ENCODE measurements at regions of chr12 and their contacts with region 1.

Region 1: DNA sequence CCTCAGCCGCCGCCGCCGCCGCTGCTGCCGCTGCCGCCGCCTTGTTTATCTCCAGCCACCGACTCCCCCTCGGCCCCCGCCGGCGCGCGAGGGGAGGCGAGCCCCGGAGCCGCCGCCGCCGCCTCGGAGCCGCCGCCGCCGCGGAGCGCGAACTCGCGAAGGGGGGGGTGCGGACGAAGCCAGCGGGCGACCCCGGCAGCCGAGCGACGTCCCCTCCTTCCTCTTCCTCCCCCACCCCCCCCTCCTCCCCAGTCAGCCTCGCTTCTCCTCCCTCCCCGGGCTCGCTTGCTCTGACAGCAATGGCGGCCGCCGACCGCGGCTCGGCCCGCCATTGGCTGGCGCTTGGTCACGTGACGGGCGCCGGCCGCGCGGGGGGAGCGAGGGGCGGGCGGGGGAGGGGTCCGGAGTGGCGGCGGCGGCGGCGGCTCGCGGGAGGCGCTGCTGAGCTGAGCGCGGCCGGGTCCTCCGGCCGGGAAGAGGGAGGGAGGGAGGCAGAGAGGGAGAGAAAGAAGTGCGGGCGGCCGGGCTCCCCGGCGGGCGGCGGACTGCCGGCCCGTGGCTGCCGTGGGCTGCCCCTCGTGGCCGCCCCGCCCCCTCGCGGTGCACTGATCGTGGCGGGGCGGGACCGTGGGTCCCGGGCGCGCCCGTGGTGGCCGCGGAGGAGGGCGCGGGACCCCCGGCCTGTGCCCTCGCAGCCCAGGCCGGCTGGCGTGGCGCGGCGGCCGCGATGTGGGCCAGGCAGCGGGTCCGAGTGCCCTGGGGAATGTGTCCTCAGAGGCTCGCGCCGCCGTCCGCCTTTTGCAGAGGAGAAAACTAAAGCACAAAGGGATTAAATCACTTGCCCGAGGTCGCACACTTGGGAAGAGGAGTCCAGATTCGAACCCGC is at the start of gene MED13L:
- DNase-seq: peak; percentile 84
- H3K4me3 Mint-ChIP-seq: peak within 1 kb of the TSS; percentile 88
- H3K27ac Mint-ChIP-seq: peak within 1 kb of the TSS; percentile 85
- H3K4me1 Mint-ChIP-seq: peaks cover 34% of the 10 kb centered on the region
- H3K27me3 Mint-ChIP-seq: no peaks in the 10 kb centered on the region
- total RNA-seq, gene MED13L: 42.4 to 46.0 TPM

Region 2: GRCh38 chr12:116142936-116143898 is 134.4 kb before region 1 on chr12:
- CTCF ChIA-PET with region 1: no interaction called
- intact Hi-C with region 1: loop called (anchors 2 kb)
- DNase-seq: no peak
- H3K4me3 Mint-ChIP-seq: no peak overlapping the region
- H3K27ac Mint-ChIP-seq: peak overlapping the region; percentile 13
- H3K4me1 Mint-ChIP-seq: peaks cover 55% of the 10 kb centered on the region
- H3K27me3 Mint-ChIP-seq: no peaks in the 10 kb centered on the region

Region 3: GRCh38 chr12:116265351-116266147 is 12.1 kb before region 1 on chr12:
- CTCF ChIA-PET with region 1: interaction called, 5 read pairs
- intact Hi-C with region 1: loop called (anchors 1 kb)
- DNase-seq: no peak
- H3K4me3 Mint-ChIP-seq: no peak overlapping the region
- H3K27ac Mint-ChIP-seq: no peak overlapping the region
- H3K4me1 Mint-ChIP-seq: peaks cover 51% of the 10 kb centered on the region
- H3K27me3 Mint-ChIP-seq: no peaks in the 10 kb centered on the region

Region 4: GRCh38 chr12:116358893-116359761 is 81.5 kb after region 1 on chr12:
- CTCF ChIA-PET with region 1: interaction called, 4 read pairs
- intact Hi-C with region 1: loop called (anchors 2 kb)
- DNase-seq: peak; percentile 67
- H3K4me3 Mint-ChIP-seq: peak overlapping the region; percentile 65
- H3K27ac Mint-ChIP-seq: peak overlapping the region; percentile 77
- H3K4me1 Mint-ChIP-seq: peaks cover 25% of the 10 kb centered on the region
- H3K27me3 Mint-ChIP-seq: no peaks in the 10 kb centered on the region

Region 5: DNA sequence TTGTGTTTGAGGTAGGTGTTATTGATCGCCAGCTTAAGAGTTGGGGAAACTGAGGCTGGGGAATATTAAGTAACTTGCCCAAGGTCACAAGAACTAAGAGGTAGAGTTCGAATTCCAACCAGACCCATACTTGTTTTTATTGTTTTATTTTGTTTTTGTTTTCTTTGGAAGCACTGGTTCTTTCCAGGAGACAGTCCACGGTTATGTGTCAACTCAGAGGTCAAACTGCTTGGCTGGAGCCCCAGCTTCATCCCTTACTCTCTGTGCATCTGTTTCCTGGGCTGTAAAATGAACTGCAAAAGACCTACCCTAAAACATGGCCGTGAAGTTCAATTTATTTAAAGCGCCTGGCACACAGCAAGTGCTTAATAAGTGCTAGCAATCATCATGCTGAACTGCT is 207.2 kb after region 1 on chr12:
- CTCF ChIA-PET with region 1: no interaction called
- intact Hi-C with region 1: no loop called
- DNase-seq: no peak
- H3K4me3 Mint-ChIP-seq: no peak overlapping the region
- H3K27ac Mint-ChIP-seq: no peak overlapping the region
- H3K4me1 Mint-ChIP-seq: peaks cover 11% of the 10 kb centered on the region
- H3K27me3 Mint-ChIP-seq: no peaks in the 10 kb centered on the region

Region 6: DNA sequence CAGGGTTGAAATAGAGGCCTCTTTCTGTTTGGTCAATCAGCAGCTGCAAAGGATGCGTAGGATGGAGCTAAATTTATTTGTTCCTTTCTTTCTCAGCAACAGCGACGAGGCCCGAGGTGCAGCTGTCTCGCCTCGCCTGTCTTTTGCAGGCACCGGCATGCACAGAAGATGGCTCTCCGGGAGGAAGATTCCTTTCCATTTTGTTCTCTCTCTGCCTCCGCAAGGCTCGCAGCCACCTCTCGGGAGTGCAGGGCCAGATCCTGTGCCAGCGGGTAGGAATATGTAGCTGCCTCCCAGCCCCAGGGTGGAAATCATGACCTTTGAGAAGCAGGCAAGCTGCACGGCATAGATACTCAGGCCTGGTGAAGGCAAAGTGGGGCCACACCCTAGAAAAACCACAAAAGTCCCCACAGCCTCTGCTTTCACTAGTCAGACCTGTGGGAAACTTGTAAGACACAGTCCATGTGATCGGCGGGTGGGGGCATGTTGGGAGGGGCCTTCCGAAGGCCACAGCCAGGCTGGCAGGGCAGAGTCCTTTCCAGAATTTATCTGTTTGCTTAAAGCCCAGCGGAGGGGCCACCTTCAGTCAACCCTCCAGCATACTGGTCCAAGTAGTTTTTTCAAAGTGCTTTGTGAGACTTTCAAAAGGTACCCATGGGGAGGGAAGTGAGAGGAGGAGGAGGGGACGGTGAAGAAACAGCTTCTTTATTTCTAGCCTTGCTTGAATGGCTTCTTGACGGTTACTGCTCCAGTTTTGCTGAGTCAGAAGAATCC is 281.7 kb after region 1 on chr12 and contains the start of gene MAP1LC3B2:
- CTCF ChIA-PET with region 1: no interaction called
- intact Hi-C with region 1: loop called (anchors 2 kb)
- DNase-seq: peak; percentile 92
- H3K4me3 Mint-ChIP-seq: peak within 1 kb of the TSS; percentile 73
- H3K27ac Mint-ChIP-seq: peak within 1 kb of the TSS; percentile 95
- H3K4me1 Mint-ChIP-seq: peaks cover 22% of the 10 kb centered on the region
- H3K27me3 Mint-ChIP-seq: no peaks in the 10 kb centered on the region
- total RNA-seq, gene MAP1LC3B2: 1.2 to 1.5 TPM

Region 7: DNA sequence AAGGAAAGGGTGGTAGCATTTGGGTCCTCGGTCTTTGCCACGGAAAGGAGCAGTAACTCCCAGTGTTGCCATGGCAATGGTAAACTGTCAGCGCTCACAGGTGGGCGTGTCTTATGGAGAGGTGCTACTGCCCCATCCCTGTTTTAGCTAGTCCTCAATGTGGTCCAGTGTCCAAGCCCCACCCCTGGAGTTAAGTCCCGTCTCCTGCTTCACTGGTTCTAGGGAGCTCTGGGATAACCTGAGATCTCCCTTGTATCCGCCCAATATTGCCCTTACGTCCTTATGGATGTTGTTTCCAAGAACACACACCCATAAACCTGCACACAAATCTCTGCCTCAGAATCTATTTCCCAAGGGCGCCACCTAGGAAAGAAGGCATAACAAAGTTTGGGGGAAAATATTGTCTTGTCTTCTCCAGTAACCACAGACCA is 396.1 kb after region 1 on chr12:
- CTCF ChIA-PET with region 1: no interaction called
- intact Hi-C with region 1: loop called (anchors 5 kb)
- DNase-seq: no peak
- H3K4me3 Mint-ChIP-seq: no peak overlapping the region
- H3K27ac Mint-ChIP-seq: peak overlapping the region; percentile 43
- H3K4me1 Mint-ChIP-seq: peaks cover 29% of the 10 kb centered on the region
- H3K27me3 Mint-ChIP-seq: no peaks in the 10 kb centered on the region

Region 8: DNA sequence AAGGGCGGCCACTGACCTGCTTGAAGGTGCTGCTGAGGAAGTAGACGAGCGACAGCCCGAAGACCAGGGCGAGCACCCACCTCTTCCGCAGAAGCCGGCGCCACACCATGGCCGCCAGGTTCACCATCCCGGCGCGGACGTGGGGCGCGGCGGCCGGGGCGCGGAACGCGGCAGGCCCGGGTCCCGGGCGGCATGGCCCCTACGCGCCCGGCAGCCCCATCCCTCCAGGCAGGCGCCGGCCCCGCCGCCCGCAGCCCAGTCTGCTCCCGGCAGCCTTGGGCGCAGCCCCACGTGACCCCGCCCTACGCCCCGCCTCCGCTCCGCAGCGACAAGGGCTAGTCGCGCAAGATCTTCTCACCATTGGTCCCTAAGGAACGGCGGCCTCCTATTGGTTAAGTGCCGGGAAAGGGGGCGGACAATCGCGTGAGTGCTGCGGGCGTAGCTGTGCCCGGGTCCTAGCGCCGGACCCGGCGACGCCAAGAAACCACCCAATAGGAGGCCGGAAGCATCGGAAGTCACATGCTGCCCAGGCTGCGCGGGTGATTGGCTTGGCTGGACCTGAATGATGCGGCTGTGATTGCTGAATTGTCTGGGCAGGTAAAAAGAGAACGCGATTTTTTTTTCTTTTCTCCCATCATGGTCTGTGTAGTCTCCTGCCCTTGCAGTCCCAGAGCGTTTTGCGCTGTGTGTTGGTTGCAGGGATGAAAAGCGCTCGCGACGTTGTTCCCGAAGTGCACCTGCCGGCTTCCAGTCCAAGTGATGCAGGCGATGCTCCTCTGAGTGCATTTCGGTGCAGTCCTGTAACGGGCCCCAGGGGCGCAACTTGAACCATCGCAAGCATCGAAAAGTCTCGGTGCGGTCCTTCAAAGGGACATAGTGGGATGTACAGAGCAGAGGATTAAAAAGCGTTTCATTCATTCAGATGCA is 460.4 kb after region 1 on chr12 and contains the starts of genes RNFT2 and SPRING1:
- CTCF ChIA-PET with region 1: no interaction called
- intact Hi-C with region 1: loop called (anchors 5 kb)
- DNase-seq: peak; percentile 99
- H3K4me3 Mint-ChIP-seq: peak within 1 kb of the TSS; percentile 96
- H3K27ac Mint-ChIP-seq: peak within 1 kb of the TSS; percentile 79
- H3K4me1 Mint-ChIP-seq: peaks cover 22% of the 10 kb centered on the region
- H3K27me3 Mint-ChIP-seq: no peaks in the 10 kb centered on the region
- total RNA-seq, gene RNFT2: 13.0 to 15.8 TPM
- total RNA-seq, gene SPRING1: 14.8 to 16.9 TPM

Measured in activated naive CD4-positive, alpha-beta T cell treated with anti-CD3 and anti-CD28 coated beads for 36 hours (primary cell).